CD8-positive, alpha-beta memory T cell (primary cell): ENCODE measurements at regions of chr1 and their contacts with region 1.

Region 1: DNA sequence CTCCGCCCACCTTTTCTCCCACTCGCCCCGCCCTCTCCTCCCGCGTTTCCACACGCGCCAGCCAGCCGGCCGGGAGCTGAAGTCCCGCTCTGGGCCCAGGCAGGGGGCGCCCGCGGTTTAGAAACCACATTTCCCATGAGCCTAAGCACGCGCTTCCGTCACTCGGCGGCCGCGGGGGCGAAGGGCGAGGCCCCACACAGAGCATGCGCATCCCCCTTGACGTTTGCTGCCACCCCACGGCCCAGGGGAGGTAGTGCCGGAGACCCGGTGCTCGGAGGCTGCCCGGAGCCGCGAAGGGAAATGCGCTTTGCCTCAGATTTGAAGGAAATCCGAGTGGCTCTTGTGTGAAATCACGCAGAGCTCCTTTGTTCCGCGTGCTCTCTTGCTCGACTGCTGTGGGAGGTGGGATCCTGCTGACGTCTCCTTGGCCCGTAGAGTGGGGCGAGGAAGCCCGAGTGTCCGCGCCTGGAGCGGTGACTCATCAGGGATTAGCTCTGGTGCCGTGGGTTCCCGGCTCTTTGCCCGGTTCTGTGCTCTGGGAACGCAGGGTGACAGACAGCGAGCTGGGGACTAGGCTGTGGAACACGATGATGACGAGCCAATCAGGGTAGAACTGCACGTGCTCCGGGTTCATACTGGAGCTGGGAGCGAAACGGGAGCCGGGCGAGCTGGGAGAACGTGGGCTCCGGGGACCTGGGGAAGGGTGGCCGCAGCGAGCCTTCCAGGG is 407 bp upstream of the B3GALNT2 start:
- DNase-seq: peak; percentile 96 to 99 (median 98)
- H3K4me3 ChIP-seq: peak overlapping the region; percentile 95
- H3K4me3 Mint-ChIP-seq: peak overlapping the region; percentile 78 to 98 (median 96)
- H3K27ac ChIP-seq: peak overlapping the region; percentile 95
- H3K27ac Mint-ChIP-seq: peak overlapping the region; percentile 93 to 99 (median 98)
- H3K4me1 ChIP-seq: peaks cover 4% of the 10 kb centered on the region
- H3K4me1 Mint-ChIP-seq: peaks cover 14 to 29% (median 29%) of the 10 kb centered on the region in 3 donors
- H3K27me3 ChIP-seq: no peaks in the 10 kb centered on the region
- H3K27me3 Mint-ChIP-seq: peaks cover 0 to 8% of the 10 kb centered on the region in 2 donors

Region 2: GRCh38 chr1:235622933-235623779 is 118.5 kb after region 1 on chr1:
- CTCF ChIA-PET with region 1: no interaction called
- POLR2A ChIA-PET with region 1: interaction called, 10 read pairs
- DNase-seq: no peak
- H3K4me3 ChIP-seq: no peak overlapping the region
- H3K4me3 Mint-ChIP-seq: no peak overlapping the region
- H3K27ac ChIP-seq: no peak overlapping the region
- H3K27ac Mint-ChIP-seq: peak overlapping the region in 1 of 8 donors; percentile 5
- H3K4me1 ChIP-seq: no peaks in the 10 kb centered on the region
- H3K4me1 Mint-ChIP-seq: peaks cover 0 to 3% (median 2%) of the 10 kb centered on the region in 3 donors
- H3K27me3 ChIP-seq: no peaks in the 10 kb centered on the region
- H3K27me3 Mint-ChIP-seq: peaks cover 2 to 16% of the 10 kb centered on the region in 2 donors